K562 (cell line): ENCODE measurements at regions of chr5 and their contacts with region 1.

Region 1: GRCh38 chr5:43484106-43484849 is 613 bp upstream of the TMEM267 start:
- DNase-seq: peak; percentile 73 to 95 (median 82)
- ATAC-seq: peak; percentile 83
- H3K4me3 ChIP-seq: peak overlapping the region; percentile 73
- H3K27ac ChIP-seq: peak overlapping the region; percentile 92
- H3K4me1 ChIP-seq: peaks cover 6 to 8% of the 10 kb centered on the region in 2 experiments; a peak in 3 of 5 replicates
- H3K27me3 ChIP-seq: no peaks in the 10 kb centered on the region
- CTCF ChIP-seq: peak; percentile 90 to 91 (median 90)
- EP300 ChIP-seq: peak; percentile 31; the same call in 1 of the 2 replicates
- POLR2A ChIP-seq: peak; percentile 81
- RAD21 ChIP-seq: peak; percentile 58 to 75

Region 2: GRCh38 chr5:43040287-43041098 is 443.8 kb before region 1 on chr5 and contains the start of gene ANXA2R:
- CTCF ChIA-PET with region 1: no interaction called
- POLR2A ChIA-PET with region 1: interaction called, 7 read pairs
- in situ Hi-C with region 1: no loop called
- intact Hi-C with region 1: loop called (anchors 1 kb)
- DNase-seq: peak; percentile 44 to 99 (median 58)
- ATAC-seq: peak; percentile 61
- H3K4me3 ChIP-seq: peak within 1 kb of the TSS; percentile 49
- H3K27ac ChIP-seq: peak within 1 kb of the TSS; percentile 94
- H3K4me1 ChIP-seq: peaks cover 6 to 39% of the 10 kb centered on the region in 2 experiments; a peak in 4 of 5 replicates
- H3K27me3 ChIP-seq: no peaks in the 10 kb centered on the region
- CTCF ChIP-seq: peak; percentile 93 to 98 (median 96)
- EP300 ChIP-seq: peak; percentile 74
- POLR2A ChIP-seq: peak; percentile 43
- RAD21 ChIP-seq: peak; percentile 75 to 89
- polyA plus RNA-seq, gene ANXA2R: 2.1 to 3.5 TPM

Region 3: DNA sequence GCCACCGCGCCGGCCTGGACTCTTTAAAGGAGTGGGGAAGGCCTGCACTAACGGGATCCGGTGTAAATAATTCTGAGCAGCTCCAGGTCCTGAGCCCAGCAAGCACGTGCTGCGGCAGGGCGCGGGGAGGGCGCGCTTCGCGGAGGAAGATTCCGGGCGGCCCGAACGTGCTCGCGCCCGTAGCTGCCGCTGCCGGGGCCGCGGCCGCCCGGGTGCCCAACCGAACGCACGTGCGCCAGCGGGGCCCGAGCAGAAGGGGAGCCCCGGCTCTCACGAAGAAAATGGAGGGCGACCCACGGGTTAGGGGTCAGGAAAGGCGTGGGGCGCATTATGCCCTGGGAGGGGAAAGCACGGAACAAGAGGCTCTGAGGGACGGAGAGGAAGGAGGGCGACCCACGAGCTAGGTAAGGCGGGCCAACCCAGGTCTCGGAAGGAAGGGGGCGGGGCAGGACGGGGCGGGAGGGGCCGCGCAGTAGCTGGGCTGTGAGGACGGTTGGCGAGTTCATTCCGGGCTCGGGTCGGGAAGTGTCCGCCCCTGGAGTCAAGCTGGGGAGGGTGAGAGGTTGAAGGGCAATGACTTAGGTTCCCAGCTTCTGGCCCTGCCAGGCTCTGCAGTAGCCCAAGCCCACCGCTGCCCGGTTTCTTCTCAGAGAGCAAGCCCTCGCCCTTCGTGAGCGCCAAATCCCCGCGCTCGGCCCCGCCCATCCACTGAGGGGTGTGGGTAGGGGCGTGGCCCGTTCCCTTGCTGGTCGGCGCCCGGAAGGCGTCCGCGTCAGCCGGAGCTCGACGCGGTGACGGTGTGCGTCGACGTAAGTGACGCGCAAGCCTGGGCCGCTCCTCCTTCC is 363.3 kb before region 1 on chr5 and contains the start of gene ZNF131:
- CTCF ChIA-PET with region 1: no interaction called
- POLR2A ChIA-PET with region 1: interaction called, 13 read pairs
- in situ Hi-C with region 1: no loop called
- intact Hi-C with region 1: no loop called
- DNase-seq: peak; percentile 96 to 100 (median 96)
- ATAC-seq: peak; percentile 93
- H3K4me3 ChIP-seq: peak within 1 kb of the TSS; percentile 88
- H3K27ac ChIP-seq: peak within 1 kb of the TSS; percentile 97
- H3K4me1 ChIP-seq: peaks cover 14 to 20% of the 10 kb centered on the region in 2 experiments
- H3K27me3 ChIP-seq: no peaks in the 10 kb centered on the region
- CTCF ChIP-seq: 0 out of 6 replicates have a peak, but pooled peaks of 1 of the 3 experiments have one; percentile 2
- EP300 ChIP-seq: peak; percentile 2; the same call in 1 of the 2 replicates
- POLR2A ChIP-seq: peak; percentile 92
- RAD21 ChIP-seq: no peak
- polyA plus RNA-seq, gene ZNF131: 28.5 to 31.7 TPM

Region 4: DNA sequence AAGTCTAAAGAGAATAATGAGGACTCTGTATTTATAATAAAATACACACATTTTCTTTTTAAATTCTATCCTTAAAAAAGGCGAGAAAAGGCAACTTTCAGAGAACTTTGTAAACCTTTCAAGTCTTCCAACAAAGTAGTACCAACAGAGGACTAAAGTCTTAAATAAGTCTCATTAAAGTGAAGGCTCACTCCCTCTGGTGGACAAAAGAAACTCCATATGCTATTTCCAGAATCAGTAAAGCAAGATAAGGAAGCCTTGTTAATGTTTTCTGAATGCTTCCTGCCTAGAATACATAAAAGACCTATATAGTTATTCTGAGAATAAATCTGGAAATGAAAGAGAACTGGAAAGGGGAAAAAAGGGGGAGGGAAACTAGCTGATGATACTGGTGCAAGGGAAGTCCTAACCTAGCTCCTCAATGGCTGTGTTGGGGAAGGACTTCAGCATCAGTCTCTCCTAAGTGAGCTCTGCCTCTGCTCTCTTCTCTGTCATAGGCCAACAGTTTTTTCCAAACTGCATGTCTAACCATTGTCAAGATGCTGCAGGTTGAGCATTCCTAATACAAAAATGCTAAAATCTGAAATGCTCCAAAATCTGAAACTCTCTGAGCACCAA is 178.2 kb before region 1 on chr5:
- CTCF ChIA-PET with region 1: no interaction called
- POLR2A ChIA-PET with region 1: interaction called, 7 read pairs
- in situ Hi-C with region 1: no loop called
- intact Hi-C with region 1: loop called (anchors 5 kb)
- DNase-seq: peak; percentile 41 to 85 (median 44)
- ATAC-seq: peak; percentile 78
- H3K4me3 ChIP-seq: no peak overlapping the region
- H3K27ac ChIP-seq: no peak overlapping the region
- H3K4me1 ChIP-seq: peaks cover 11 to 57% of the 10 kb centered on the region in 2 experiments
- H3K27me3 ChIP-seq: no peaks in the 10 kb centered on the region
- CTCF ChIP-seq: peak; percentile 62 to 83 (median 72); a peak in 5 of 6 replicates
- EP300 ChIP-seq: no peak
- POLR2A ChIP-seq: no peak
- RAD21 ChIP-seq: peak; percentile 83 to 85

Region 5: DNA sequence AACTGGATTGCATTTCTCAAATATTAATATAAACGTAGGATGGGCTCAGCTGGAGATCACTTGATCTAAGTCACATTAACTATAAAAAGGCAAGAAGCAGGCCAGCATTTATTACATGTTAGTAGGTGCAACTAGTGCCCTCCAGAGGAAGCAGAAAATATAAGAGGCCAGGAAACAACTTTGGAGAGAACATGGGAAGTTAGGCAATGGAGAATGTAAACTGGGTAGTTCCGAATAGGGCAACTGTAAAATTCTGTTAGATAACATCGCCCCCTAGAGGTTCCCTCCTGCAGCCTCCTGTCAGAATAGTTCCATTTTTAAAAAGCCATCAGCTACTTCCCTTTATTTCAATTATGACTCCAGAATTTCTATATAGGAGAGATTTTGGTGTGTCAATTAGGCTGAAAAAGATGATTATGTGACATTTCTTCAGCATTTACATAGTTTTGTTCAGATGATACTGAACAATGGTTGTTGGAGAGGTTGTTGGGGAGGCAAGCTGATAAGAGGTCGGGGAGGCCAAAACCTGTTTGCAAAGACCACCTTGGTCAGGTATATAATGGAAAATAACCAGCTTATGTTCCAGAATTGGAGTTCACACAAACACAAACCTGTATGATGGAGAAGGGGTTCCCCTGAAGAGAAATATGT is 94.5 kb before region 1 on chr5:
- CTCF ChIA-PET with region 1: no interaction called
- POLR2A ChIA-PET with region 1: interaction called, 9 read pairs
- in situ Hi-C with region 1: no loop called
- intact Hi-C with region 1: loop called (anchors 5 kb)
- DNase-seq: peak; percentile 77 to 92 (median 84)
- ATAC-seq: peak; percentile 97
- H3K4me3 ChIP-seq: no peak overlapping the region
- H3K27ac ChIP-seq: no peak overlapping the region
- H3K4me1 ChIP-seq: no peaks in the 10 kb centered on the region
- H3K27me3 ChIP-seq: no peaks in the 10 kb centered on the region
- CTCF ChIP-seq: peak; percentile 88 to 99 (median 96)
- EP300 ChIP-seq: peak; percentile 48; the same call in 1 of the 2 replicates
- POLR2A ChIP-seq: no peak
- RAD21 ChIP-seq: peak; percentile 99

Region 6: DNA sequence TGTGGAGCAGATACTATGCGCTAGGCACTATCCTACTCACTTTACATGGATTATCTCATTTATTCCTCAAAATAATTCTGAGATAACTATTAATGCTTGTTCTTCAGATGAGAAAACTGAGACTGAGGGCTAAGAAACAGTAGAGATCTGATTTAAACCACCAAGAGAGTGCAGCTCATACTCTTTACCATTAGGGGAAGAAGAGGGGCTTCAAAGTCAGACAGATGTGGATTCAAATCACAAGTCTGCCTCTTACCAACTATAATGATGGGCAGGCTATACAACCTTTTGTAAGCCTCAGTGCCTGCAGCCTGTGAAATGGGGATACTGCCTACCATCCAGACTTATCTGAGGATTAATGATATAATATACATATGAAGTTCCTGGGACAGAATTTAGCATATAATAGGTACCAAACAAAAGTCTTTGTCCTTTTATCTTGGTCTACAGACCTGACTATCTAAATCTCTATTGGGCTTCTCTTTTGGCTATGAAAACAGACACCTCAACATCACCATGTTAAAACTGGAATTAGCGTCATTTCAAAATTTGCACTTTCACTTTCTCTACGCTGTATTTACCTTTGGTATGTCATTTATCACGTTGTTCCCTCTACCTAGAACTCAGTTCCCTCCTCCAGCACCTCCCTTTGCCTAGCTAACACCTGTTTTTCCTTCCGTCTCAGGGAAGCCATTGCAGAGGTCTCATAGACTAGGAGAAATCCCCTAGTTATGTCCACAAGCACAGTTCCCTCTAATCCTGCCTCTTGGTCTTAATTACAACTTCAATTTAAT is 13.2 kb after region 1 on chr5:
- CTCF ChIA-PET with region 1: no interaction called
- POLR2A ChIA-PET with region 1: interaction called, 43 read pairs
- in situ Hi-C with region 1: no loop called
- intact Hi-C with region 1: no loop called
- DNase-seq: no peak
- ATAC-seq: peak; percentile 63
- H3K4me3 ChIP-seq: no peak overlapping the region
- H3K27ac ChIP-seq: no peak overlapping the region
- H3K4me1 ChIP-seq: no peaks in the 10 kb centered on the region
- H3K27me3 ChIP-seq: no peaks in the 10 kb centered on the region
- CTCF ChIP-seq: no peak
- EP300 ChIP-seq: no peak
- POLR2A ChIP-seq: no peak
- RAD21 ChIP-seq: no peak

Region 7: DNA sequence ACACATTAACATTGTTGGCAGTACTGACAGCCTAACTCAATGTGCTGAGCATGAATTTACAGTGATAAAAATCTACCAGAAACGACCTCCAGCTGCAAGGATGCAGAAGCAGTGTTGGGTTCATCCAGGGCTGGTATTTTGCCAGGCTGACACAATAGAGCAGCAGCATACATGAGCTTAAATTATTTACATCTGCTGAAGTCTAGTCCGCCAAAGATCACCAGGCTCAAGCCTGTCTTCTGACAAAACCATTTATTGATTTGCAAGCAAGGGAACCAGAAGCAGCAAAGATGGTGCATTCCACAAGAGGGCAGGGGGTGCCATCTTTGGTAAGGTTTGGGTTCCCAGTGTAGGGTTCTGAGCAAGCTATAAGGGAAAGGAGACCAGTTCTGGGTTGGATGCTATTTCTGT is 39.4 kb after region 1 on chr5:
- CTCF ChIA-PET with region 1: no interaction called
- POLR2A ChIA-PET with region 1: interaction called, 10 read pairs
- in situ Hi-C with region 1: no loop called
- intact Hi-C with region 1: no loop called
- DNase-seq: no peak
- ATAC-seq: 0 out of 3 replicates have a peak, but pooled peaks have one; percentile 10
- H3K4me3 ChIP-seq: no peak overlapping the region
- H3K27ac ChIP-seq: no peak overlapping the region
- H3K4me1 ChIP-seq: 0 out of 5 replicates have a peak, but pooled peaks cover 0 to 2% of the 10 kb centered on the region in 2 experiments
- H3K27me3 ChIP-seq: no peaks in the 10 kb centered on the region
- CTCF ChIP-seq: no peak
- EP300 ChIP-seq: no peak
- POLR2A ChIP-seq: no peak
- RAD21 ChIP-seq: no peak